Activated B cell treated with CpG ODN at 0.5 μM for 24 hours (primary cell): ENCODE measurements at regions of chr3 and their contacts with region 1.

Region 1: GRCh38 chr3:120348981-120349818 is at the start of gene LRRC58:
- DNase-seq: peak; percentile 90
- ATAC-seq: peak; percentile 92
- H3K4me3 Mint-ChIP-seq: peak within 1 kb of the TSS; percentile 97
- H3K27ac Mint-ChIP-seq: peak within 1 kb of the TSS; percentile 93
- H3K4me1 Mint-ChIP-seq: peaks cover 42% of the 10 kb centered on the region
- H3K27me3 Mint-ChIP-seq: no peaks in the 10 kb centered on the region
- CTCF ChIP-seq: no peak
- total RNA-seq, gene LRRC58: 16.8 and 18.3 TPM in 2 replicates

Region 2: DNA sequence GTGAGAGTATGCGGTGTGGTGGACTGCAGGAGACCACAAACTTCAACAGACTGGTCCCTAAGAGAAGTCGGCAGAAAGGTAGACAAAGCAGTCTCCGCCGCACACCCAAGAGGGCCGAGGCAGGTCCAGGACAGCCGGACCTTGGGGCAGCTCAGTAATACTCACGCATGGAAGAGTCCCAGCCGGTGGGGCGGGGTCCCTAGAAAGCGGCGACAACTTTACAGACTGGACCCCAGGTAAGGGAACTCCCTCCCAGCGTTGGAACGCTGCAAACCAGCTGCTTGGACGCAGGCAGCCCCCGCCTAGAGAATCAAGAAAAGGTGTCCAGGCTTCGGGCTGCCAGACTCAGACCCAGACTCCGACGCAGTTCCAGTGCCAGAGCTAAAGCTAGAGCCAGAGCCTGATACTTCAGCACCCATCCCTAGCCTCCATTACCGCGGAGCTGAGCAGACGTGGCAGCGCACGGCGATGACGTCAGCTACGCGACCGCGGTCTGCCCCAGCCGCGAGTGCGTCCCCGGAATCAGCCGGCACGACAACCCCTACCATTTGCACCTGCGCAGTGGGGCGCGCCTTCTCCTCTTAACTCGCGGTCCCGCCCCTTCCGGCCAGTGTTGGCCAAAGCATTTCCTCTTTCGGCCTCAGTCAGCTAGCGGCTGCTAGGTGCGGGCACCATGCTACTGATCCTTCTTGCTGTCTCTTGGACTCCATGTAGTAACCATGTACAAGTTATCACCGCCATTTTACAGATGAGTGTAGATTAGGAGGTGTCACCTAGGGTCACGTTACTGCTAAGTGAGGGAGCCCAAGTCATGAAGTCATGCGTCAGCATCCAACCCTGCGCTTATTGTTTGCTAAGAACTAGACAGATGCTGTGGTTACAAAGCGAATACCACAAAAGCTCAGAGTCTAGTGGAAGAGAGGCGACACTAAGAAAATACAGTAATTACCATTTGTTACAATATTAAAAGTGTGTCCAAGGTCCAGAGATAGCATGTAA is 885.7 kb before region 1 on chr3 and contains the start of gene TMEM39A:
- CTCF ChIA-PET with region 1: no interaction called
- POLR2A ChIA-PET with region 1: no interaction called
- intact Hi-C with region 1: loop called (anchors 1 kb)
- DNase-seq: peak; percentile 99
- ATAC-seq: peak; percentile 88
- H3K4me3 Mint-ChIP-seq: peak within 1 kb of the TSS; percentile 98
- H3K27ac Mint-ChIP-seq: peak within 1 kb of the TSS; percentile 97
- H3K4me1 Mint-ChIP-seq: peaks cover 34% of the 10 kb centered on the region
- H3K27me3 Mint-ChIP-seq: no peaks in the 10 kb centered on the region
- CTCF ChIP-seq: no peak
- total RNA-seq, gene TMEM39A: 33.7 and 45.6 TPM in 2 replicates

Region 3: DNA sequence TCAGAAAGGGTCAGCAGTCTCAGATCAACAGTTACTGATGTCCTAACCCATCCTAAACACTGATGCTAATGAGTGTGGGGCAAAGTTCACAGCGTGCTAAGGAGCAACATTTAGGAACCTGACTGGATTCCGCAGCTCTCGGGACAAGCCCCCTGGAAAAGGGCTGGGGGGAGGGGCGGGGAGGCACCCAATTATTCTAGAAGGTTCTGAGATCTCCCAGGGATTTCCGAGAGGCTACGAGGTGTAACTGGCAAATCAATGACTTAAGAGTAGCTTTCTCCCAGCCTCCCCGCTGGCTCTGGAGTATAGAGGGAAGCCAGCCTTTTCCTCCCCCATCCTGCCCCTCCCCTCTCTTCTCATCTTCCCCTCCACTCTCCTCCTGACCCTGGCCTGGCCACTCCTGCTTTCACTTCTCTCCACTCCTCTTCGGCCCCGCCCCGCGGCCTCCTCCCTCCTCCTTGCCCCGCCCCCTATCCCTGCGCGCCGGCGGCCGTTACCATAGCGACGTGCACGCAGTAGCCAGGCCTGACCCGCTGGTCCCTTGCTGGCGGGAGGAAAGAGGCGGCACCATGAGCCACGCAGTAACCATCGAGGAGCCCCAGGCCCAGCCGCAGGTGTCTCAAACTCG is 646.6 kb before region 1 on chr3 and contains the start of gene CFAP91:
- CTCF ChIA-PET with region 1: no interaction called
- POLR2A ChIA-PET with region 1: no interaction called
- intact Hi-C with region 1: loop called (anchors 5 kb)
- DNase-seq: peak; percentile 86
- ATAC-seq: peak; percentile 92
- H3K4me3 Mint-ChIP-seq: peak within 1 kb of the TSS; percentile 86
- H3K27ac Mint-ChIP-seq: peak within 1 kb of the TSS; percentile 72
- H3K4me1 Mint-ChIP-seq: peaks cover 52% of the 10 kb centered on the region
- H3K27me3 Mint-ChIP-seq: no peaks in the 10 kb centered on the region
- CTCF ChIP-seq: no peak
- total RNA-seq, gene CFAP91: 8.5 and 12.9 TPM in 2 replicates

Region 4: GRCh38 chr3:119891944-119892721 is 457.1 kb before region 1 on chr3:
- CTCF ChIA-PET with region 1: no interaction called
- POLR2A ChIA-PET with region 1: no interaction called
- intact Hi-C with region 1: loop called (anchors 5 kb)
- DNase-seq: no peak
- ATAC-seq: no peak
- H3K4me3 Mint-ChIP-seq: no peak overlapping the region
- H3K27ac Mint-ChIP-seq: no peak overlapping the region
- H3K4me1 Mint-ChIP-seq: peaks cover 6% of the 10 kb centered on the region
- H3K27me3 Mint-ChIP-seq: no peaks in the 10 kb centered on the region
- CTCF ChIP-seq: peak; percentile 22

Region 5: DNA sequence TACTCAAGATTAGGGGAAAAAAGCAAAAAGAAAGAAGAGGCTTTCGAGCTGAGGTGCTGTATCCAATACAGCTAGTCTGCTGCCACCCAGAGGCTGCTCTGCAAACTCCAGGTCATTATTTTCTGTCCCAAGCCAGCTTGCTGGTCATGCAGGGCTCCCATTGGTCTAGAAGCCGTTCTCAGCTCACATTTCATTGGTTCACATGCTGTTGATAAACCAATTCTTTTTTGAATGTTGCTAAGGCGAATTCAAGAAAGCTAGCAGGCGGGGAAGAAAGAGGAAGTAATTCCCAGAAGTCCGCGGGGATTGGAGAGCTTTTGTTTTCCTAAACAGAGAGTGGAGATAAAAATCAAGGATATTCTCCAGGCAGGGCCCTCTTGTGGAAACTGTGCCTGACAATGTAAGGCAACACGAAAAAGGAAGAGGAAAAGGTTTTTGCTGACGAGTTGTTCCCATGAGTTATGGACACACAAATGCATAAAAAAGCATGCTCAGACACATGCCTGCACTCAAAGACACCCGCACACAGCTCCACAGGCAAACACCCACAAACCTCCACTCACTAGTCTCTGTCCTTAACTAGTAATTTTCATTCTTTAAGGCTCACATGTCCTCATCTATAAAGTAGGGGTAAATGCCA is 68.2 kb after region 1 on chr3:
- CTCF ChIA-PET with region 1: interaction called, 15 read pairs
- POLR2A ChIA-PET with region 1: interaction called, 10 read pairs
- intact Hi-C with region 1: loop called (anchors 1 kb)
- DNase-seq: peak; percentile 61
- ATAC-seq: peak; percentile 100
- H3K4me3 Mint-ChIP-seq: peak overlapping the region; percentile 83
- H3K27ac Mint-ChIP-seq: peak overlapping the region; percentile 37
- H3K4me1 Mint-ChIP-seq: peaks cover 16% of the 10 kb centered on the region
- H3K27me3 Mint-ChIP-seq: no peaks in the 10 kb centered on the region
- CTCF ChIP-seq: no peak

Region 6: GRCh38 chr3:120596116-120596852 is 247.1 kb after region 1 on chr3 and contains the start of gene NDUFB4:
- CTCF ChIA-PET with region 1: no interaction called
- POLR2A ChIA-PET with region 1: interaction called, 10 read pairs
- intact Hi-C with region 1: loop called (anchors 1 kb)
- DNase-seq: peak; percentile 82
- ATAC-seq: peak; percentile 96
- H3K4me3 Mint-ChIP-seq: peak within 1 kb of the TSS; percentile 96
- H3K27ac Mint-ChIP-seq: peak within 1 kb of the TSS; percentile 94
- H3K4me1 Mint-ChIP-seq: peaks cover 11% of the 10 kb centered on the region
- H3K27me3 Mint-ChIP-seq: peaks cover 2% of the 10 kb centered on the region
- CTCF ChIP-seq: no peak
- total RNA-seq, gene NDUFB4: 80.4 and 86.3 TPM in 2 replicates

Region 7: GRCh38 chr3:120753831-120754230 is 404.6 kb after region 1 on chr3:
- CTCF ChIA-PET with region 1: no interaction called
- POLR2A ChIA-PET with region 1: no interaction called
- intact Hi-C with region 1: no loop called
- DNase-seq: no peak
- ATAC-seq: no peak
- H3K4me3 Mint-ChIP-seq: no peak overlapping the region
- H3K27ac Mint-ChIP-seq: no peak overlapping the region
- H3K4me1 Mint-ChIP-seq: peaks cover 16% of the 10 kb centered on the region
- H3K27me3 Mint-ChIP-seq: no peaks in the 10 kb centered on the region
- CTCF ChIP-seq: no peak